ENCODE measurements at regions of chr9 and their contacts with region 1.

Region 1: DNA sequence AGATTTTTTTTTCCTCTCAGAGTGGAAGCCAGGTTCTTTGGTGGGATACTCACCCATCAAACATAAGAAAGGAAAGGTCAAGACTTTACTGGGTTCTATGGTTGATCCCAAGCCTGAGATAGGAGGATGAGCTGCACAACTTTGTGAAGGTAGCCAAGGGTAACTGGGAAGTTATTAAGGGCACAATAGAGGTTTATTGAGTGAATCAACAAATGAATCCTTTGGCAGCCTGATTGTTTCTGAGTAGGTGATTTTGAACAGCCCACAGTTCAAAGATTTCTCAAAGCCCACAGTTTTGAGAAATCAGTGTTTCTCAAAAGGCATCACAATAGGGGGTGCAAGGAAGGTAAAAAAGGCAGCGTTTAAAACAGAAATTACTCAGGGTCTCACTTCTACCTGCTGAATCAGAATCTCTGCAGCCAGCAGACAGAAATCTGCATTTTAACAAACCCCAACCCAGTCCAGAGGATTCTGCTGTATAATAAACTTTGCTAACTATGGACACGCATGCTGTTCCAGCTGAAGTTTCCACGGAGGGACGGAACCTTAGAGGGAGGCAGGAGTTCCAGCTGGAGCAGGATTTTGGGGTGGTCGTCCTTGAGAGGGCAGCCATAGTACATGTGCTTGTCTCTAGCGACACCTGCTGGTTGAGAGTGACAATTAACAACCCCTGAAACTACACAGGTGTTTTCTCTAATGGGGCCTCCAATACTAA is 32.7 kb upstream of the FSD1L start:
- DNase-seq: peak; percentile 73
- ATAC-seq: peak; percentile 91
- H3K4me3 Mint-ChIP-seq: no peak overlapping the region
- H3K27ac Mint-ChIP-seq: no peak overlapping the region
- H3K4me1 Mint-ChIP-seq: peaks cover 3% of the 10 kb centered on the region
- H3K27me3 Mint-ChIP-seq: peaks cover 28% of the 10 kb centered on the region
- CTCF ChIP-seq: peak; percentile 86

Region 2: DNA sequence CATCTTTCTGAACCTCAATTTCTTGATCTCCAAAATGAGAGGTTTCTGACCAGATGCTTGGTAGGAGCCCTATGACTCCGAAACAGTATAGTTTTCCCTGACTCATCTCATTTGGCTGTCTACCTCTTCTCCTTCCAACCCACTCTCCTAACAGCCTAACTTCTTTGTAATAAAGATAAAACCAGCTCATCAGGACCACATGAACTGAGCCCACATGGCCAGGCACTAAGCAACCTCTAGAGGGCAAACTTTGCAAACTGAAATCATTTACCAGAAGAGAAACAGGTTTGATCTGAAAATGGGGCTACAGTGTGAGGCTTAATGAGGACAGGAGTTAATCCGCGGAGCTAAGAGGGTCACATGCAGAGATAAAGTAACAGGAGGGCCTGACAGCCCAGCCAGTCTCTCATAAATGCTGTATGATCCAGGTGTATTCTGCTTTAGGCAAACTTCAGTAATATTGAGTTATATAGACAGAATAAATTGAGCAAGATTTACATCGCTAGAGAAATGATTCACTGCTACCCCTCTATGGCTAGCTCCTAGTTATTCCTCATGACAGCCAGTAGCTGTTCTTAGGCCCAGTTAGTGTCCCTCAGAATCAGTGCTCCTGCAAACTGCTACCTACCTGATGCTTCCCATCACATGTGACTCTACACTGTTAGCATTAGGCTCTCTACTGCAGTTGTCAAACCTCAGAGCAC is 551.8 kb before region 1 on chr9:
- CTCF ChIA-PET with region 1: interaction called, 18 read pairs
- POLR2A ChIA-PET with region 1: no interaction called
- intact Hi-C with region 1: loop called (anchors 2 kb)
- DNase-seq: peak; percentile 65
- ATAC-seq: peak; percentile 81
- H3K4me3 Mint-ChIP-seq: no peak overlapping the region
- H3K27ac Mint-ChIP-seq: no peak overlapping the region
- H3K4me1 Mint-ChIP-seq: no peaks in the 10 kb centered on the region
- H3K27me3 Mint-ChIP-seq: no peaks in the 10 kb centered on the region
- CTCF ChIP-seq: peak; percentile 68

Region 3: DNA sequence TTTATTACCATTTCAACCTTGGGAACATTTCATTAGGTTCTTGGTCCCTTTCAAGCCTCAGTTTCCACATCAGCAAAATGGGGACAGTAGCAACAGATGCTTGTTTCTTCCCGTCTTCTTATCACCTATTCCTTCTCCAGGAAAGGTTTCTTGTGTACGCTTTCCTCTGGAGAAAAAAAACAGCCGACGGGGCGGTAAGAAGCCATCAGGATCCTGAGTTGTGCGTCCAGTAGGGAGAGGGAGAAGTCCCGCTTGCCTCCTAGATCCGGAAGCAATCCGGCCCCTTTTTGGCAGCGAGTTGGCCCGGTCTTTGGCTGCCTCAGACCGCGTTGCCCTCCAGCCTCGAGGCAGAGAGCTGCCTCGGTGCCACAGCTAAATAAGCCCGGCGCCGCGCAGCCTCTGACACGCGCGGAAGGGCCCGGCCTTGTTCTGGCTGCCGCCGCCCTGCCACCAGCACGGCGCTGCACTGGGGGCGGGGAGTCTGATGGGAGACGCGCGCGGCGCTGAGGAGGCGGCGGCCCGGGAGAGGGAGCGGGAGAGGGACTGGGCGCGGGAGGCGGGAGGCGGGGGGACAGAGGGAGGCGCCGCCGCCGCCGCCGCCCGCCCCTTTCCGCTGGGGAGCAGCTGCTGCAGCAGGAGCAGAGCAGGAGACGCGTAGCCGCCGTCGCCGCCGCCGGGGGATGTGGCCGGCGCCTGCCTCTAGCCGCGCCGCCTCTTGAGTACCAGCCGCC is 170.9 kb before region 1 on chr9 and contains the start of gene SLC44A1:
- CTCF ChIA-PET with region 1: interaction called, 7 read pairs
- POLR2A ChIA-PET with region 1: no interaction called
- intact Hi-C with region 1: loop called (anchors 10 kb)
- DNase-seq: peak; percentile 90
- ATAC-seq: peak; percentile 91
- H3K4me3 Mint-ChIP-seq: peak within 1 kb of the TSS; percentile 84
- H3K27ac Mint-ChIP-seq: peak within 1 kb of the TSS; percentile 75
- H3K4me1 Mint-ChIP-seq: peaks cover 16% of the 10 kb centered on the region
- H3K27me3 Mint-ChIP-seq: peaks cover 16% of the 10 kb centered on the region
- CTCF ChIP-seq: no peak
- total RNA-seq, gene SLC44A1: 7.2 to 8.3 TPM